ENCODE measurements at regions of chr1 and their contacts with region 1.

Region 1: GRCh38 chr1:75265792-75266191 is 131.6 kb downstream of the LHX8 start:
- DNase-seq: peak; percentile 27
- ATAC-seq: peak; percentile 58; the same call in 1 of the 2 replicates
- H3K4me3 ChIP-seq: no peak overlapping the region
- H3K27ac ChIP-seq: no peak overlapping the region
- H3K4me1 ChIP-seq: no peaks in the 10 kb centered on the region
- H3K27me3 ChIP-seq: no peaks in the 10 kb centered on the region
- CTCF ChIP-seq: peak; percentile 69

Region 2: DNA sequence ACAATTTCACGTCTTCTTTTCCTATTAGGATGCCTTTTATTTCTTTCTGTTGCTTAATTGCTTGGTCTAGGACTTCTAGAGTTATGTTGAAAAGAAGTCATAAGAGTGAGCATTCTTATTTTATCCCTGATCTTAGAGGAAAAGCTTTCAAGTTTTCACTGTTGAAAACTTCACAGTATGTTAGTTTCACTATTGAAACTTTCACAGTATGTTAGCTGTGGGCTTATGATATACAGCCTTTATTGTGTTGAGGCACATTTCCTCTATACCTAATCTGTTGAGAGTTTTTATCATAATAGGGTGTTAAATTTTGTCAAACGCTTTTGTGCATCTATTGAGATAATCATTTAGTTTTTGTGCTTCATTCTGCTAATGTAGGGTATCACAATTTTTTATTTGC is 95.5 kb after region 1 on chr1:
- CTCF ChIA-PET with region 1: no interaction called
- POLR2A ChIA-PET with region 1: no interaction called
- in situ Hi-C with region 1: no loop called
- intact Hi-C with region 1: no loop called
- DNase-seq: no peak
- ATAC-seq: no peak
- H3K4me3 ChIP-seq: no peak overlapping the region
- H3K27ac ChIP-seq: no peak overlapping the region
- H3K4me1 ChIP-seq: no peaks in the 10 kb centered on the region
- H3K27me3 ChIP-seq: no peaks in the 10 kb centered on the region
- CTCF ChIP-seq: no peak

Region 3: DNA sequence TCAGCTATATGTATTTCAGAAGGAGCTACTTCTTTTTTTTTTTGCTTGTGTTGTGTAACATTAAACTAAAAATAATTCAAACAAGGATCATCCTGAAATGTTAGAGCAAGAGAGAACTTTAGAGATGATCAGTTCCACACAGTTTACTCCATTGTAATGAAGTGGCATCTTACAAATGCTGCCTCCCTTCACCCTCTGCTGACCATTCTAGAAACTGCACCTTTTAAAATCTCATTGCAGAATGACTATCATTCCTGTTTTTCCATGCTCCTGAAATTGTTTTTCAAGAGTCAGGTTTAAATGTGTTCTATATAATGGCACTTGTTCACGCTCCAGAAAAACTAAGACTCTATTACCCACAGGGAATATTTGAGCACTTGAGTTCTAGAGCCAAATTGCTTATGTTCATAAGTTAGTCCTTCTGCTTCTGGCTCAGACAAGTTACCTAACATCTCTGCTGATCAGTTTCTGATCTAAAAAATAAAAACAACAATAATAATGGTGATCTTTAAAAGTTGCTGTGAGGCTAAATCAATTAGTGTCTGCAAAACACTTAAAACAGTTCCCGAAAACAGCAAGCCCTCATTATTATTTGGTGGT is 366.7 kb after region 1 on chr1:
- CTCF ChIA-PET with region 1: no interaction called
- POLR2A ChIA-PET with region 1: no interaction called
- in situ Hi-C with region 1: no loop called
- intact Hi-C with region 1: loop called (anchors 1 kb)
- DNase-seq: no peak
- ATAC-seq: peak; percentile 63; the same call in 1 of the 2 replicates
- H3K4me3 ChIP-seq: no peak overlapping the region
- H3K27ac ChIP-seq: no peak overlapping the region
- H3K4me1 ChIP-seq: no peaks in the 10 kb centered on the region
- H3K27me3 ChIP-seq: no peaks in the 10 kb centered on the region
- CTCF ChIP-seq: peak; percentile 76; the same call in 1 of the 2 replicates